ENCODE measurements at regions of chr19 and their contacts with region 1.

Region 1: DNA sequence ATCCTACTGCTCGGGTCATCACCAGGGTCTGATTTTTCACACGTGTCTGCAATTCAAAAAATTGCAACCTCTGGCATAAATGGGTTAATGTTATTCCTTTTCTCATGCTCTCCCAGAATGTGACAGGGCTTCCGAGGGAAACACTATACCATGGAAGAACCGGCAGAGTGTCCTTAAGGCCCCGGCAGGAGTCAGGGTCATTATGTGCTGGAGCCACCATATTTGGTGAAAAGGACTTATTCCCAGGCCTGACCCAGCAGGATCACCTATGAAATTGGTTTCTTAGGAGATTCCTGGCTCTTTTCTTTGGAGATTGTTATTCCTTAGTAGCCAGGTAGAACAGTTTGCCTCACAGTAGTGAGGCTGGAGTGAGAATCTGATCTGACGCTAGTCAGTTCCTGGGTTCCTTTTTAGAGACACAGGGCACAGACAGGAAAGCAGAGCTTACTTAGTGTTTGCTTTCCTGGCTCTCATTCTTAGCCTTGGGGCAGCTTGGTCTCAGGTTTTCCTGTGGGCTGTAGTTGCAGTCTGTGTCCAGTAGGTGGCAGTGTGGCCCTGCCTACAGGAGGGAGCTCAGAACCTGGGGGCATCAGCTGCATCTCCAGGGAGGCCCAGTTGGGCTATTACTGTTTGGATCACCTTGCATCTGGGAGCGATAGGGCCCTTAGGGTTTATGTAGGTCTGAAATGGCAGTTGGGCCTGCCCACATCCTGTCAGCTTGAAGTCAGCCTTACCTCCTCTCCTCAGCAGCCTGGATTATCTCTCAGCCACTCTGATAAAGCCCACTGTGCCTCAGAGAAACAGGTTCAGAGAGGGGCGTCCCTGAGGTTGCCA is 12.4 kb downstream of the SNRNP70 start:
- DNase-seq: peak; percentile 61
- ATAC-seq: peak; percentile 96
- H3K4me3 Mint-ChIP-seq: no peak overlapping the region
- H3K27ac Mint-ChIP-seq: no peak overlapping the region
- H3K4me1 Mint-ChIP-seq: peaks cover 7% of the 10 kb centered on the region
- H3K27me3 Mint-ChIP-seq: no peaks in the 10 kb centered on the region
- CTCF ChIP-seq: peak; percentile 71

Region 2: GRCh38 chr19:49085020-49085867 is 12.4 kb before region 1 on chr19 and contains the start of gene SNRNP70:
- CTCF ChIA-PET with region 1: interaction called, 18 read pairs
- POLR2A ChIA-PET with region 1: interaction called, 4 read pairs
- intact Hi-C with region 1: no loop called
- DNase-seq: peak; percentile 99
- ATAC-seq: peak; percentile 97
- H3K4me3 Mint-ChIP-seq: peak within 1 kb of the TSS; percentile 93
- H3K27ac Mint-ChIP-seq: peak within 1 kb of the TSS; percentile 93
- H3K4me1 Mint-ChIP-seq: peaks cover 41% of the 10 kb centered on the region
- H3K27me3 Mint-ChIP-seq: peaks cover 6% of the 10 kb centered on the region
- CTCF ChIP-seq: no peak
- total RNA-seq, gene SNRNP70: 268 and 298 TPM in 2 replicates

Region 3: GRCh38 chr19:49148784-49149651 is 51.3 kb after region 1 on chr19:
- CTCF ChIA-PET with region 1: interaction called, 15 read pairs
- POLR2A ChIA-PET with region 1: no interaction called
- intact Hi-C with region 1: loop called (anchors 1 kb)
- DNase-seq: peak; percentile 72
- ATAC-seq: peak; percentile 66
- H3K4me3 Mint-ChIP-seq: peak overlapping the region; percentile 82
- H3K27ac Mint-ChIP-seq: no peak overlapping the region
- H3K4me1 Mint-ChIP-seq: peaks cover 37% of the 10 kb centered on the region
- H3K27me3 Mint-ChIP-seq: peaks cover 50% of the 10 kb centered on the region
- CTCF ChIP-seq: no peak

Region 4: GRCh38 chr19:49210108-49210900 is 112.6 kb after region 1 on chr19:
- CTCF ChIA-PET with region 1: interaction called, 49 read pairs
- POLR2A ChIA-PET with region 1: interaction called, 10 read pairs
- intact Hi-C with region 1: loop called (anchors 1 kb)
- DNase-seq: peak; percentile 32
- ATAC-seq: peak; percentile 83
- H3K4me3 Mint-ChIP-seq: peak overlapping the region; percentile 57
- H3K27ac Mint-ChIP-seq: no peak overlapping the region
- H3K4me1 Mint-ChIP-seq: peaks cover 43% of the 10 kb centered on the region
- H3K27me3 Mint-ChIP-seq: no peaks in the 10 kb centered on the region
- CTCF ChIP-seq: no peak

Region 5: GRCh38 chr19:49570138-49570856 is 472.6 kb after region 1 on chr19:
- CTCF ChIA-PET with region 1: no interaction called
- POLR2A ChIA-PET with region 1: no interaction called
- intact Hi-C with region 1: loop called (anchors 10 kb)
- DNase-seq: no peak
- ATAC-seq: peak; percentile 93
- H3K4me3 Mint-ChIP-seq: peak overlapping the region; percentile 41
- H3K27ac Mint-ChIP-seq: peak overlapping the region; percentile 53
- H3K4me1 Mint-ChIP-seq: peaks cover 30% of the 10 kb centered on the region
- H3K27me3 Mint-ChIP-seq: no peaks in the 10 kb centered on the region
- CTCF ChIP-seq: peak; percentile 98